ENCODE measurements at regions of chr3 and their contacts with region 1.

Region 1: DNA sequence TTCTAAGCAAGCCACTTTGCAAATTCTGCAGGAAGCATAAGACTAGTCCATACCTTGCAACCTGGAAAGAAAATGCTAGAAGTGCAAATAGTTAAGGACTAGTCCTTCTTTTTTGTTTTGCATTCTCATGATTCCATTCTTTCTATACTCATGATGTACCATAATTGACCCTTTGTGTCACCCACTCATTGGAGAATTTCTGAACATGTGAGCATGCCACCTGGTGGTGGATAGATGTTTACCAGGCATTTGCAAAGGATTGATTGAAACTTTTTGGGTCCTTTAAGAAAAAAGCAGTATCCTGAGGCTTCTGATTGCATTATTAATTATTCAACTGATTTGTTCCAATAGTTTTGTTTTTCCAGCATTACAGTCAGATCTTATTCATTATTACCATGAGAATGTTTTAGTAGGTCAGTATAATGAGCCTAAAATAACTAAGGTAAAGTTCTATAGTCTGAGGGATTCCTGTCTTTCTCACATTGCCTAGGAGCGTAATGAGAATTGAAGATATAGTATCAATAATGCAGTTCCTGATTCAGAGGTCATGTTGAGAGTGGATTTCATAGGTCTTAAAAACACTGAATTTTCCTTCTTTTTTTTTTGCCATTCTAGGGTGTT is 20.2 kb upstream of the DIPK2A start:
- DNase-seq: peak in 1 of 2 donors; percentile 45
- H3K4me3 ChIP-seq: no peak overlapping the region
- H3K27ac ChIP-seq: no peak overlapping the region
- H3K4me1 ChIP-seq: no peaks in the 10 kb centered on the region
- H3K27me3 ChIP-seq: no peaks in the 10 kb centered on the region
- CTCF ChIP-seq: peak in 5 of 7 experiments; percentile 39 to 66 (median 59)
- EP300 ChIP-seq: no peak
- POLR2A ChIP-seq: no peak

Region 2: DNA sequence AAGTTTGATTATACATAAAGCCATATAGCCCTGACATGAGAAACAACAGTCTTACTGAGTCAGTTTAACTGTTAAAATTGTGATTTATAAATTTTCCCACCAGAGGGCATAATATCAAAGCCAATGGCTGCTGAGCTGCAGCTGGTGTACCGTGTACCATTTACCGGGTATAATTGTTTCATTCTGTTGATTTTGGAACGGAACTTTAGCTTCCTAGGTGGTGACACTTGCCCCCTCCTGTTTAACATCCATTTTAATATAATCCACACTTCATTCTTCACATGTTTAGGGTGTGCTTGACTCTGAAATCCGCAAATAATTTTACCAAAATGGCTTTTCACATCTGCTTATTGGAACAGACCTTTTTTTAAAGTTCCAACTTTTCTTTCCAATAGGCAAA is 176.0 kb before region 1 on chr3:
- intact Hi-C with region 1: loop called (anchors 10 kb)
- DNase-seq: peak in 1 of 2 donors; percentile 64
- H3K4me3 ChIP-seq: no peak overlapping the region
- H3K27ac ChIP-seq: no peak overlapping the region
- H3K4me1 ChIP-seq: peaks cover 0 to 13% (median 4%) of the 10 kb centered on the region in 4 donors
- H3K27me3 ChIP-seq: no peaks in the 10 kb centered on the region
- CTCF ChIP-seq: peak in 5 of 7 experiments; percentile 7 to 46 (median 28)
- EP300 ChIP-seq: no peak
- POLR2A ChIP-seq: no peak